HEK293 (cell line): ENCODE measurements at regions of chr22 and their contacts with region 1.

Region 1: DNA sequence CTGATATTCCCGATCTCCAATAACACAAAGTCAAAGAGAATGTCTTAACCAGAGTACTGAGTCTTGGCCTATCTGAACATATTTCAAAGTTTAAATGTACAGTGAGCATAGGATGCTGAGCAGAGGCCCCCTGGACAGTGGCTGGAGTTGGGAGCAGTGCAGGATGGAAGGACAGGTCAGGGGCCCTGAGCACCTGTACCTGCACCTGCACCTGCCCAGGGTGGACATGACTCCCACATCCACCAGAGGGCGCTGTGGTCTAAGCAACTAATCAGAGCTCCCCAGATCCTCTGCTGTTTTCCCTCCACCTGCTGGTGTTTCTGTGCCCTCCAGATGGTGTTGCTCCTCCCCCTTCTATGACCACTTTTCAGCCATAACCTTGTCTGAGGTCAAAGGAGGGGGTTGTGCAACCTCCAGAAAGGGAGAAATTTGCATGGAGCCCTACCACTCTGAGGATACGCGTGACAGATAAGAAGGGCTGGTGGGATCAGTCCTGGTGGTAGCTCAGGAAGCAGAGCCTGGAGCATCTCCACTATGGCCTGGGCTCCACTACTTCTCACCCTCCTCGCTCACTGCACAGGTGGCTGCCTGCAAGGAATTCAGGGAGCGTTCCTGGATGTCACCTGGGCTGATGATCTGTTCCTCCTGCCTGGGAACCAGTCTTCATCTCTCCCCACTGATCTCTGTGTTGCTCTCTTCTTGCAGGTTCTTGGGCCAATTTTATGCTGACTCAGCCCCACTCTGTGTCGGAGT is 49.1 kb upstream of the VPREB1 start:
- H3K4me3 ChIP-seq: no peak overlapping the region
- H3K27ac ChIP-seq: no peak overlapping the region
- H3K4me1 ChIP-seq: no peaks in the 10 kb centered on the region
- CTCF ChIP-seq: peak; percentile 84

Region 2: GRCh38 chr22:22110548-22111266 is 84.7 kb before region 1 on chr22:
- CTCF ChIA-PET with region 1: interaction called, 15 read pairs
- POLR2A ChIA-PET with region 1: no interaction called
- H3K4me3 ChIP-seq: no peak overlapping the region
- H3K27ac ChIP-seq: no peak overlapping the region
- H3K4me1 ChIP-seq: no peaks in the 10 kb centered on the region
- CTCF ChIP-seq: peak; percentile 40; the same call in 1 of the 2 replicates

Region 3: DNA sequence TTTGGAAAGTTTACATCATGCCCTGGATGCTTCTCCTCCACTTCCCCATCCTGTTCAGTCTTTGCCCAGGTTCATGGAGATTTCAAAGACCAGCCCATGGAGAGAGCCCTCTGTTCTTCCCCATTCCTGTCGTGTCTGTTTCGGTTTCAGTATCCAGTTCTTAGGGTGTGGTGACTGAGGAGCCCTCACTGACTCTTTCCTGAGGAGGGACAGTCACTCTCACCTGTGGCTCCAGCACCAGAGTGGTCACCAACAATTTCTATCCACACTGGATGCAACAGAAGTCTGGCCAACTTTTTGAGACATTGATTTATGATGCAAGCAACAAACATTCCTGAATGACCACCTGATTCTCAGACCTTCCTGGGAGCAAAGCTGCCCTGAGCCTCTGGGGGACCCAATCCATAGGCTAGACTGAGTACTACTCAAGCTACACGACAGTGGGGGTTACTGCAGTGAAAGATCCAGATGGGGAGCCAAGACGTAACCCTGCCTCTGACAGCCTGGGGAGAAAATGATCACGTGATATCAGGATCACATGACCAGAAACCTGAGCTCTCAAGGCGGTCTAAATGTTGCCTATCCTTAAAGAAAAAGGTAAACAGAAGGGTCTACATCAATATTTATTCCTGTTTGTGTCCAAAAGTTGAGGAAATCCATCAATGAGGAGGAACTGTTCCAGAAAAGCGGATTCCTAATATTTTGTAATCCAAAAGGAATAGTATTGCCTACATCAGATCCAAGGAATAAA is 27.1 kb before region 1 on chr22:
- CTCF ChIA-PET with region 1: interaction called, 31 read pairs
- POLR2A ChIA-PET with region 1: no interaction called
- H3K4me3 ChIP-seq: no peak overlapping the region
- H3K27ac ChIP-seq: no peak overlapping the region
- H3K4me1 ChIP-seq: no peaks in the 10 kb centered on the region
- CTCF ChIP-seq: no peak

Region 4: DNA sequence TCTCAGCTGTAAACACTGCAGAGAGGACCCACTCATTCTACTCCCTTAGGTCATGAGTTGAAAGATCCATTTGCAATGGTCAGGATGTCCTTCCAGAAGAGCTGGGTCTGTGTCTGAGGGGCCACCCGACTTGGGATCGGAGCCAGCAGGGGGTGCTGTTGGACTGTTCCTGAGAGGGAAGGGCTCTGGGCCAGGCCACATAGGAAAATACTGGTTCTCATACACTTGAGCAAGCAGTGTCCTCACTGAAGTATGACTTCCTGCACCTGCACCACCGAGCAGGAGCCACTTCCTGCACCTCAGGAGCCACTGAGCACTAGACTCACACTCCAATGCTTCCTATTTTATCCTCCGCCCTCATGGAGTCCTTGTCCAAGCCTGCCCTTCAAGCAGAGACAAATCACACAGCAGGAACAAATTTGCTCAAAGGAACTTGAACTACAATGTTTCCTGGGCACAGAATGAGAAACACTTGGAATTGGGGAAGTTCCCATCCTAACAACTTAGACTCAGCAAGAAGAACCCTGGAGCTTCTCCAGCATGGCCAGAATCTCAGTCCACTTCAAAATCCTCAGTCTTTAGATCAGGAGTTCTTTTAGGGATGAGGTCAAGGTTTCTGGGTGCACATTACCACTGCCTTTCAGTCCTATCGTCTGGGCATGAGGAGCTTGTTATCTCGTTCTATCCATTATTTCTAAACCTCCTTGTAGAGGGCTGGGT is 12.6 kb after region 1 on chr22:
- CTCF ChIA-PET with region 1: interaction called, 75 read pairs
- POLR2A ChIA-PET with region 1: no interaction called
- H3K4me3 ChIP-seq: no peak overlapping the region
- H3K27ac ChIP-seq: no peak overlapping the region
- H3K4me1 ChIP-seq: no peaks in the 10 kb centered on the region
- CTCF ChIP-seq: peak; percentile 75

Region 5: DNA sequence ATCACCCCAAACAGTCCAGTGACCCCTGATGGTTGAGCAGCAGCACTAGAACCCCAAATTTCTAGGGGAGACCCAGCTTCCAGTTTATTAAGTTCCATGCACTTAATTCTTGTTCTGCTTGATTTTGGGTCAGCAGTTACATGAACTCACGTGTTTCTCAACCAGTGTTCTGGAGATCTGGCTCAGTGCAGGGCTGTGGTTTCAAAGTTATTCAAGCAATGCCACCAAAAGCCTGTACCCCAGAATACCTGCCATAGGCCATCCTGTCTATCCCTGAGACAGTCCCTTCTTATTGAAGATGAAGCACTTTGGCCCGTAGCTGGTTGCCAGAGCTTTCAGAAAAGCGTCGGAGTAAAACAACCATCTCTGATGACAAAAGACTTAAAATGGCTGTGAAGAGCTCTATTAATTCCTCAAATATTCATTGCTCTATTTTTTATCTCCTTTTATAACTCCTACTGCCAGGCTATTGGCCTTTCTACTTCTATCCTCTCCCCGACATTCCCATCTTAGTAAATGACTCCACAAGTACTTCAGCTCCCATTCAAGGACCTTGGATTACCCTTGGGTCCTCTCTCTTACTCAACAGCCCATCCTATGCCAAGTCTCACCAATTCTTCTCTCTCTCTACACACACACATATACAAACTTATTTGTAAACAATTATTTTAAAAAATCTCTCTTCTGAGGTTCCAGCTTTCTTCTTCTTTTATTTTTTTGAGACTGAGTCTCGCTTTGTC is 31.2 kb after region 1 on chr22:
- CTCF ChIA-PET with region 1: interaction called, 13 read pairs
- POLR2A ChIA-PET with region 1: no interaction called
- H3K4me3 ChIP-seq: no peak overlapping the region
- H3K27ac ChIP-seq: no peak overlapping the region
- H3K4me1 ChIP-seq: no peaks in the 10 kb centered on the region
- CTCF ChIP-seq: no peak